ENCODE measurements at regions of chr3 and their contacts with region 1.

Region 1: DNA sequence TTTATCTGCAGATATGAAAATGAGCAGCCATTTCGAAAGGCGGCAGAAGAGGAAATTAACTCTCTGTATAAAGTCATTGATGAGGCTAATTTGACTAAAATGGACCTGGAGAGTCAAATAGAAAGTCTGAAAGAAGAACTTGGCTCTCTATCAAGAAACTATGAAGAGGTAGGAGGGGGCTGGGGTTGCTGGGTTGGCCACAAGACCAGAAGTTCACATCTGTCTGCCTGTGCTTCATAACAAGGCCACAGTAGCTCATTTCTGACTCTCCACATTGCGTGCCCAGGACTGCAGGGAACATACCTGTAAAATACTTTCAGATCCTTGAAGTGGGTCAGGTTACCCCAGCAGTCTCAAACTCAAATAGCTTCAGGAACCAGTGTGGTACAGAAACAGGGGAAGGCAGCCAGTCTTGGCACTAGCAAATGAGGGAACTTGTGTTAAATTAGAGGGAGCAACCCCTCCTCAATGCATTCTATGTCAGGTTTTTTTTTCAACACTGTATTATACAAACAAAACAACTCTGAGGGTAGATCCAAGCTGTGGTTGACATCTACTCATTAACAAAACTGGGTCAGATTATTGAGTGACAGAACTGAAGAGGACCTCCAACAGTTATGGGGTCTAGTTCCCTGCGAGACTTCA is 48.7 kb downstream of the BFSP2 start:
- DNase-seq: peak; percentile 86
- H3K4me3 Mint-ChIP-seq: no peak overlapping the region
- H3K27ac Mint-ChIP-seq: peak overlapping the region; percentile 76
- H3K4me1 Mint-ChIP-seq: peaks cover 39% of the 10 kb centered on the region
- H3K27me3 Mint-ChIP-seq: no peaks in the 10 kb centered on the region

Region 2: GRCh38 chr3:132659365-132660051 is 789.1 kb before region 1 on chr3 and contains the start of gene ACAD11:
- CTCF ChIA-PET with region 1: no interaction called
- POLR2A ChIA-PET with region 1: no interaction called
- intact Hi-C with region 1: loop called (anchors 10 kb)
- DNase-seq: peak; percentile 58
- H3K4me3 Mint-ChIP-seq: peak within 1 kb of the TSS; percentile 93
- H3K27ac Mint-ChIP-seq: peak within 1 kb of the TSS; percentile 88
- H3K4me1 Mint-ChIP-seq: peaks cover 44% of the 10 kb centered on the region
- H3K27me3 Mint-ChIP-seq: no peaks in the 10 kb centered on the region
- total RNA-seq, gene ACAD11: 11.2 to 13.8 TPM

Region 3: DNA sequence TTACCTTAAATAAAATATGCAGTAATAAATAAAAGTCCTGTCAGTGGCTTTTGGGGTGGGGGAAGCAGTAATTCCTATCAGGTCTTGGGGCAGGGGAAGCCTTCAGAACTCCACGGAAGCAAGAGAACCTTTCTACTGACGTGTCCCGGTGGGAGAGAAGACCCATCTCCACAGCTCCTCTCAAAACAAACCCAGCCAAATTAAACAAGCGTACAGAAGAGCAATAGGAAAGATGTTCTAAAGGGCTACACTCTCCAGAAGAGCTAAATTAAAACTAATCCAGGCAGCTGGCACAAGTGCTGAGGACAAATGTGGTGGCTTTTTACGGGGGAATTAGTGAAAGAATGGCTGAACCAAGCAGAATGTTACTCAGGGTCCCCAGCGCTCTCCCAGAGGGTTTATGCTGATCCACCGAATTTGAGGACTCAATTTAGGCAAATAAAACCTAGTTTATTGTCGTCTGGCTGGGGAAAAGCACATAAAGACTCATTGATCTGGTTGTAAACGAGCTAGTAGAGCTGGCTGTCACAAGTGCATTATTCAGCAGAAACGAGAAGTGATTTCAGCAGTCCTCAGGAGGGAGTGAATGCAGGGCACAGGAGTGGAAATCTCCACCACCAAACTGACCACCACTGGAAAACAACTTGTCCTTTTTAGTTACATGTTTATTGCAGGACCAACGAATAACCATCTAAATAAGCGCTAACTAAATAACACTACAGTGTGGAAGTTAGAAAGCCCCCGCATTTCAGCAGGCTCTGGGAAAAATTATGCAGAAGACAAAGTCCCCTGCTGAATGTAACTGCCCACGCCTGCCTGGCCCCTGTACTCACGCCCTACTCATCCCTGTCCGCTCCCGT is 35.2 kb before region 1 on chr3:
- CTCF ChIA-PET with region 1: no interaction called
- POLR2A ChIA-PET with region 1: no interaction called
- intact Hi-C with region 1: no loop called
- DNase-seq: no peak
- H3K4me3 Mint-ChIP-seq: no peak overlapping the region
- H3K27ac Mint-ChIP-seq: no peak overlapping the region
- H3K4me1 Mint-ChIP-seq: peaks cover 3% of the 10 kb centered on the region
- H3K27me3 Mint-ChIP-seq: peaks cover 3% of the 10 kb centered on the region

Region 4: DNA sequence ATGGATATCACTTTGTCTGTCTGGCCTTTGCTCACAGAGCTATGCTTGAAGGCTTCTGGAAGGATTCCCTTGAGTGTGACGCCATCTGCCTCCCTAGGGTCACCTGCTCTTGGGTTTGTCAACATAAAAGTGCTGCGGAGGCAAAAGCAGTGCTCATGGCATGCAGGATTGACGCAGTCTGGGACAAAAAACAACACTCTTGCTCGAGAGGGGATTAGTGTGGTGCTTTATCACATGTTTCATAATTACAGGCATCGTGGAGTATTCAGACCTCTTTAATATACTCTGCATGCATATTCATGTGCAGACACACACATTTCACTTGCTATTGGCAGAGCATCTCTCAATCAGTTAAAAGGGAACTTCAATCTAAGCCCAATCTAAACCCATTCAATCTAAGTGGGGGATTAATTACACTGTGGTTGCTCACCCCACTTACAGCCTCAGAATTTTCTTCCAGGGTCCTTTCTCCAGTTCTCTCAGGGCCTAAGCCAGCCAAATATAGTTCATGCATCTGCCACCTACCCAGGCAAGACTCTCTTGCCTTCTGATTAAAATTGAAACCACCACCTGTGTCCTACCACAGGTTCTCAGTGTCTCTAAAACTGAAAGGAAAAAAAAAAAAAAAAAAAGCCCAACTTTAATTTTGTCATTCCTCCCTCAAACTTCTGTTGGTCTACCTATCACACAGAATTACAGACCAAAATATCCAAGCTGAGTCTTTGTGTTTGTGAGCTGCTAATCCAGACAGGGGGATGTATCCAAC is 26.8 kb after region 1 on chr3:
- CTCF ChIA-PET with region 1: interaction called, 4 read pairs
- POLR2A ChIA-PET with region 1: interaction called, 10 read pairs
- intact Hi-C with region 1: loop called (anchors 1 kb)
- DNase-seq: peak; percentile 38
- H3K4me3 Mint-ChIP-seq: no peak overlapping the region
- H3K27ac Mint-ChIP-seq: peak overlapping the region; percentile 57
- H3K4me1 Mint-ChIP-seq: peaks cover 38% of the 10 kb centered on the region
- H3K27me3 Mint-ChIP-seq: no peaks in the 10 kb centered on the region

Region 5: GRCh38 chr3:133542871-133543270 is 94.3 kb after region 1 on chr3:
- CTCF ChIA-PET with region 1: no interaction called
- POLR2A ChIA-PET with region 1: no interaction called
- intact Hi-C with region 1: no loop called
- DNase-seq: no peak
- H3K4me3 Mint-ChIP-seq: no peak overlapping the region
- H3K27ac Mint-ChIP-seq: no peak overlapping the region
- H3K4me1 Mint-ChIP-seq: no peaks in the 10 kb centered on the region
- H3K27me3 Mint-ChIP-seq: no peaks in the 10 kb centered on the region

Region 6: DNA sequence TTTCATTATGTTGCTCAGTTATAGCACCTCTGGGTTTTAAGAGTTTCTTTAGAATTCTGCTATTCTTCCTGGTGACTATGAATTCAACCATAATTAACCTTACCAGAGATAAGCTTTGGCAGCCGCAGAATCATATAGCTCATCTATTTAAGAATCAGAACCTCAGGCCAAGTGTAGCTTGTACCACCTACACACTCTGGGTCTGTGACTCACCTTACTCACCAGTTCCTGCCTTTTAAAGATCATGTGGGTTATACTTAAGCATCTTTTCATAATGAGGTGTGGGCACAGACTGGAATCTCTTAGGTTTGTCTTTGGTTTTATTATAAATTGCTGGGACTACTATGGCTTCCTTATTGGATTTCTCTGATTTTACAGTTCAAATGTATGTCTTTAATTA is 146.7 kb after region 1 on chr3:
- CTCF ChIA-PET with region 1: interaction called, 5 read pairs
- POLR2A ChIA-PET with region 1: interaction called, 7 read pairs
- intact Hi-C with region 1: loop called (anchors 1 kb)
- DNase-seq: peak; percentile 41
- H3K4me3 Mint-ChIP-seq: no peak overlapping the region
- H3K27ac Mint-ChIP-seq: peak overlapping the region; percentile 23
- H3K4me1 Mint-ChIP-seq: peaks cover 28% of the 10 kb centered on the region
- H3K27me3 Mint-ChIP-seq: no peaks in the 10 kb centered on the region

Region 7: GRCh38 chr3:133927540-133928066 is 479.0 kb after region 1 on chr3:
- CTCF ChIA-PET with region 1: no interaction called
- POLR2A ChIA-PET with region 1: no interaction called
- intact Hi-C with region 1: loop called (anchors 10 kb)
- DNase-seq: peak; percentile 72
- H3K4me3 Mint-ChIP-seq: peak overlapping the region; percentile 38
- H3K27ac Mint-ChIP-seq: no peak overlapping the region
- H3K4me1 Mint-ChIP-seq: peaks cover 6% of the 10 kb centered on the region
- H3K27me3 Mint-ChIP-seq: peaks cover 10% of the 10 kb centered on the region

Measured in activated CD4-positive, alpha-beta memory T cell treated with anti-CD3 and anti-CD28 coated beads for 36 hours (primary cell).